Head of caudate nucleus (tissue), 42 donors: ENCODE measurements at regions of chr20 and their contacts with region 1.

Region 1: DNA sequence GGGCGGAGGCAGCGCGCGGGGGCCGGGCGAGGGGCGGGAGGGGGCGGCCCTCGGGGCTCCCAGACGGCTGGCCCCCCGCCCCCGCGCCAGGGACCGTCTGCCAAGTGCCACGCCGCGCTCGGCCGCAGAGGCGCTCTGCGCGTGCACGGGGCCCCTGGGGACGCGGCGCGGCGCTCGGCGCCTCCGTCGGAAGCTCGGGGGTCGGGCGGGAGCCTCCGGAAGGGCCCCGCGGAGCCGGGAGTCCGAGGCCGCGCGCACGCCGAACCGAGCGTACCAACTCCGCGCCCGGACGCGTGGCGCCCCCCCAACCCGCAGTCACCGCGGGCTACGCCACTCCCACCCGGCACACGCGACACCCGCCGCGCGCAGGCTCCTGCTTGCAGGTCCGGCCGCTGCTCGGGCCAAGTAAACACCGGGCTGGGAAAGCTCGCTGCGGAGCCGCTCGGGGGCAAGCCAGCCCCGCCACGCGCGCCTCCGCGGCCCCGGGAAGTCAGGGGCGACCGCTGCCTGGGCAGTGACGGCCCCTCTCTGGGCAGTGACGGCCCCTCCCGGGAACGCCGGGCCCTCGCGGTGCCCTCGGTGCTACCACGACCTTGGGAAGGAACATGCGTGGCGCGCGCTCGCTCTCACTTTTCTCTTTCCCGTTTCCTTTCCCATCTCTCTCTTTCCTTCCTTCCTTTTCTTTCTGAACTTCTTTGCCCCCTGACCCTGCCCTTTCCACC is 384 bp upstream of the PREX1 start:
- DNase-seq: peak in 40 of 42 donors; percentile 71 to 94 (median 86)

Region 2: DNA sequence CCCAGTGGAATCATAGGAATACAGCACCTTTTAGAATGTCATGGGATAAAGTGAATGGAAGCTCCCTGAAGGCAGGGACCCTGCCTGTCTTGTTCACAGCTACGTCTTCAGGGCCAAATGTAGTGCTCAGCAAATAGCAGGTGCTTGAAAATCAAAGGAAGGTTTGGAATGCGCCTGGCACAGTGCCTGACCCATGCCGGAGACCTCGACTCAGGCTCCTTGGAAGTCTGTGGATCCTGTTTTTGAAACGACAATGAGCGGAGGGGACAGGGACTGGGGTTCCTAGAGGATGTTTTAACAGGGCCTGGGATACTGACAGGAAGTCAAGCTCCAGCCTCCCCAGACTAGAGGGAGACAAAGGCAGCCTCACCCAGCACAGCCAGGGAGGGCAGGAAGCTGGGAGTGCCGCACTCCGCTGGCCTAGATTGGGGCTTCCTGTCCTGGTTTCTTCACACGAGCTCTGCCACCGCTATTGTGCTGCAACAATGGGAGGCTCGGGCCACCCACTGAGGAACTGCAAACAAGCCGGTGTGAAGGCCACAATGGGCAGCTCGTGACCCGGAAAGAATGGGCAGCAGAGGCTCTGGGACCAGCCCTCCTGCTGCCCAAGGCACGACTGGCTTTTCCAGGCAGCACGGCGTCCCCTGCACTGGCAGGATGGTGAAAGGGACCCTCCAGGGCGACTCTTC is 77.1 kb before region 1 on chr20:
- intact Hi-C with region 1: loop called (anchors 10 kb)
- DNase-seq: peak; percentile 54 to 91 (median 77)

Region 3: DNA sequence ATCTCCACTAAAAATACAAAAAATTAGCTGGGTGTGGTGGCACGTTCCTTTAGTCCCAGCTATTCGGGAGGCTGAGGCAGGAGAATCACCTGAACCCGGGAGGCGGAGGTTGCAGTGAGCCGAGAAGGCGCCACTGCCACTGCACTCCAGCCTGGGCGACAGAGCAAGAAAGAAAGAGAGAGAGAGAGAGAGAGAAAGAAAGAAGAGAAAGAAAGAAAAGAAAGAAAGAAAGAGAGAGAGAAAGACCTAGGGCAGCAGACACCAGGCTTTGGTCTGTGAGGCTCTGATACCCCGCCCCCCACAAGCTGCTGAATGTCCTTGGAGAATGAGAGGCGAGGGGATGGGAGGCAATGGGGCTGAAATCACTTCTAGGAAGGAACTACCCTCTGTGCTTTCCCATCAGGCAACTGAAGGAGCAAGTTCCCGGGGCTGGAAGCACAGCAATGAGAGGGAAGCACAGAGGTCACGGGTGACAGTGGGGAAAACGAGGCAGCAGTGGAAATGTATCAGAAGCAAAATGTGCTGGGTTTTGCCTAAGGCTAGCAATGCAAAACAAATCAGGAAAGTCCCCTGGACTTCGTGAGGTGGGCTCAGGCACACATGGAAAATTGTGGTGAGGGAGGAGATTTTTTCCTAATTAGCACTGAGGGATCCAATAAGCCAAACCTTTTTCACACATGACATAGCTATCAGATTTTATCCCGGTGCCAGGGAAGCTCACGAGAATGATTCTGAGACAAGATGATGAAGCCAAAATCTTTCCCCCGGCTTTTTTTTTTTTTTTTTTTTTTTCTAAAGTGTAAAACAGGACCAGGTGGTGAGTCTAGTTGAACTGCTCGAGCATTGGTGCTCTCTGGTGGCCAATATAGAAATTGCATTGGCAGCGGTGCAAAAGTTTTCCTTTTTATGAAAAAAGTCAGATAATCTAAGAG is 76.4 kb after region 1 on chr20:
- intact Hi-C with region 1: loop called (anchors 10 kb)
- DNase-seq: peak in 41 of 42 donors; percentile 23 to 89 (median 72)